Posterior vena cava (tissue), 2 donors: ENCODE measurements at regions of chr1 and their contacts with region 1.

Region 1: DNA sequence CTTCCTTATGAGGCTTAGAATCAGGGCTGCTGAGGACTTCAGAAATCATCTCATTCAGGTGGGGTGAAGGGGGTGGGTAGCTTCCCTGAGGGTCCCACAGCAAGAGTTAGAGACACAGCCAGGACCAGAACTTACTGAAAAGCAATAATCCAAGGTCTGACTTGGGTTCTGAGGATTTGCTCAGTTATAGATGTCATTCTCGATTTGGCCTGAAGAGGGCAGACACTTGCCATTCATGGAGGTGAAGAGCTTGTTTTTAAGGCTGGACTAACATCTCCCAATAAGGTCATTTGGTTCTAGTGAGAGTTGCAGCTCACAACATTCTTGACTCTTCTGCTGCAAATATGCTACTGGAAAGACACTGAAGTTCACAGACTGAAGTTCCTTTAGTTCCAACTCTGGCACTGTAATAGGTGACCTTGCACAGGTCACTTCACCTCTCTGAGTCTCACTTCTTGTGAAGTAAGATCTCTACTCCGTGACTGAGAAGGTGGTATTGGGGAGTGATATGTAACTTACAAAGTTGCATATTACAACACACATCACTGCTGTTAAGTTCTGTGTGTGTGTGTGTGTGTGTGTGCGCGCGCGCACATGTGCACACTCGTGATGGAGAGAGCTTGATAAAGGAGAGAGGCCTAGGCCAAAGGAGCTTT is 69.8 kb upstream of the DIRAS3 start:
- DNase-seq: no peak

Region 2: DNA sequence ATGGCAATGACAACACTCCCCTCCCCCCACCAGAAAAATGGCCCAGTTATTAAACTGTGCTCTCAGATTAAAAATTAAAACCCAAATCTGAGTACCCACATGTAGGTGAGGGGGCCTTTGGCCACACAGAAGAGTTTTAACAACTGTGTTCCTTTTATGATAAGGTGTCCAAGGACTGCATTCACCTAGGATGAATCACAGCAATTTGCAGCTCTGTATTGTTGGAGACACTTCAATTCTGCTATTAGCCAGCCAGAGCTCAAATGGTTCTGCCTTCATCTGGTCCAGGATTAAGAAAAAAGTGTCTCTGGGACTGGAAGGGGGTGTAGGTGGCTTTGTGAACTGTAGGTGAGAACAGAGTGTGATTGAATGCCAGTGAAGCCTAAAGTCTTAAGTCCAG is 26.5 kb before region 1 on chr1:
- intact Hi-C with region 1: no loop called
- DNase-seq: no peak

Region 3: GRCh38 chr1:68149110-68149798 is 29.0 kb after region 1 on chr1:
- intact Hi-C with region 1: loop called in 1 of 2 experiments (anchors 1 kb)
- DNase-seq: no peak

Region 4: GRCh38 chr1:68221621-68222373 is 101.5 kb after region 1 on chr1:
- intact Hi-C with region 1: loop called in 1 of 2 experiments (anchors 10 kb)
- DNase-seq: no peak

Region 5: GRCh38 chr1:68321084-68321685 is 200.9 kb after region 1 on chr1:
- intact Hi-C with region 1: loop called in 1 of 2 experiments (anchors 5 kb)
- DNase-seq: no peak

Region 6: GRCh38 chr1:68344208-68344607 is 223.9 kb after region 1 on chr1:
- intact Hi-C with region 1: loop called (anchors 5 kb)
- DNase-seq: no peak

Region 7: DNA sequence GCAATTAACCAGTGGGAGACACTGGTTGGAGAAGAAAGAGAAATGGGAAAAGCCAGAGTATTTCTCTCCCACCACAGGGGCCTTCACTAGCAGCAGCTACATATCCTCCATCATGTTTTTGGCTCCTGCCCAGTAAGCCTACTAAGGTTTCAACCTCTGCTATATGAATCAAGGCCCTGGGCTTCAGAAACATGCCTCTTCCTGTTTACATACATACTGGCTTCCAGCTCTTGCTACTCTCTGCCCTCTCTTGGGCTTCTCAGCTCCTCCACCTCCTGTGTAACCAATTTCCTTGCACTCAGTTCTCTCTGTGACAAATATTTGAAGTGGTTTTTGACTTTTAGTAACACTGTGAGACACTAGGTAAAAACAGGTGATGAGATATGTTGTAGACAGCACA is 1528.2 kb after region 1 on chr1:
- intact Hi-C with region 1: no loop called
- DNase-seq: no peak